Dorsolateral prefrontal cortex (tissue), 120 donors: ENCODE measurements at regions of chr18 and their contacts with region 1.

Region 1: DNA sequence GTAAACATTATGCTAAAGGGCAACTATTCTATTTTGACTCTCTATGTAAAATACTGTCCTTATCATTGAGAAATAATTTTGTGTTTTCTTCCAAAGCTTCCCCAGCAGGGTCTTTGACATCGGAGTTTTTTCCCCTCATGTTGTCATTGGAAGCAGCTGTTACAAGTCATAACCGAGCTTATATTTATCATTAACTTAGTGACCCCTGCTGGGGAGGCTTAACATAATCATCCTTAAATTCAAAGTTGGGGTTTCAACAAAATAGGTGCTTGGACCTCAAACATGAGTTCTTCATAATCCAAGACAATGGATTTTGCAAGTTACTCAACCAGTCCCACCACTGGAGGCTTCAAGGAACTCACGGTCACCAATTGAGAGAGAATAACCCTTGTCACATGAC is 330.9 kb downstream of the DCC start:
- DNase-seq: no peak
- H3K4me3 ChIP-seq: no peak overlapping the region
- H3K27ac ChIP-seq: no peak overlapping the region
- H3K27me3 ChIP-seq: no peaks in the 10 kb centered on the region
- CTCF ChIP-seq: peak in 54 of 56 donors; percentile 18 to 75 (median 51)

Region 2: GRCh38 chr18:51668101-51668500 is 1002.8 kb before region 1 on chr18:
- intact Hi-C with region 1: loop called (anchors 1 to 10 kb)
- DNase-seq: peak; percentile 32 to 80 (median 58)
- H3K4me3 ChIP-seq: peak overlapping the region in 35 of 59 donors; percentile 4 to 59 (median 31)
- H3K27ac ChIP-seq: no peak overlapping the region
- H3K27me3 ChIP-seq: no peaks in the 10 kb centered on the region
- CTCF ChIP-seq: peak; percentile 75 to 98 (median 90)

Region 3: GRCh38 chr18:52813635-52814416 is 142.9 kb after region 1 on chr18:
- intact Hi-C with region 1: no loop called
- DNase-seq: no peak
- H3K4me3 ChIP-seq: no peak overlapping the region
- H3K27ac ChIP-seq: no peak overlapping the region
- H3K27me3 ChIP-seq: no peaks in the 10 kb centered on the region
- CTCF ChIP-seq: no peak